Heart right ventricle (tissue), 16 donors: ENCODE measurements at regions of chr5 and their contacts with region 1.

Region 1: DNA sequence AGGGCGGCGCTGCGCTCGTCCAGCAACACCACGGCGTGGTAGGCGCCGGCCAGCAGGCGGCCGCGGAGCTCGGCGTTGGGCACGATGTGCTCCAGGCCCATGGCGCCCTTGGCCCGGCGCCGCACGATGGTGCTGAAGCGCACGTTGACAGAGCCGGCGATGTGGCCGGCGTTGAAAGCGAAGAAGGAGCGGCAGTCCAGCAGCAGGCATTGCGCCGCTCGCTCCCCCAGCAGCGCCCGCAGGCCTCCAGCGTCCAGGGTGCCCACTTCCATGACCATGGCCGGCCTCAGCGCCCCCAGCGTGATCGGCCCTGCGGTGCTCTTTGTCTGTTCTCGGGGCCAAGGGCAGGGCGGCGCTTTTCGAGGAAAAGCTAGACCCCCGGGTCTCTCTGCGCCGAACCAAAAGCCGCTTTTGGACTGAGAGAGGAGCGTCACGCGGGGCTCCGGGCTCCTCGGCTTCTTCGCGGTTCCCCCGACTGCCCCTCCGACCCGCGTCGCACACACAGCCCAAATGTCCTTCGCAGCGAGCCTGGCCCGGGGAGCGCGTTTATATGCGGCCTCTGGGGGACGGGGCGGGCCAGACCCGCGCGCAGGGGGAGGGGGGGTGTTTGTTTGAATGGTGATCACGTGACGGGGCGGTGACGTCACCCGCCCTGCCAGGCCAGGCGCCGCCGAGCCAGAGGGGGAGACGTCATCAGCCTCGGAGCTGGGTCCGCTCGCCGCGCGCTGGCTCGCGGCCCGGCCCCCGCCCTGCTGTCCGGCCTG is at the start of gene DUSP1:
- DNase-seq: peak; percentile 99 to 100
- ATAC-seq: peak; percentile 63 to 88 (median 70)
- H3K4me3 ChIP-seq: peak within 1 kb of the TSS; percentile 62 to 99 (median 92)
- H3K27ac ChIP-seq: peak within 1 kb of the TSS; percentile 95 to 100 (median 100)
- H3K4me1 ChIP-seq: peaks cover under 1 to 87% (median 36%) of the 10 kb centered on the region in 9 donors
- H3K27me3 ChIP-seq: no peaks in the 10 kb centered on the region
- CTCF ChIP-seq: peak in 8 of 9 donors; percentile 16 to 59 (median 39)
- total RNA-seq, gene DUSP1: 55.7 to 215 (median 143) TPM

Region 2: GRCh38 chr5:172594867-172595466 is 175.9 kb before region 1 on chr5:
- intact Hi-C with region 1: no loop called
- DNase-seq: no peak
- ATAC-seq: no peak
- H3K4me3 ChIP-seq: no peak overlapping the region
- H3K27ac ChIP-seq: peak overlapping the region in 2 of 10 donors; percentile 15 to 30
- H3K4me1 ChIP-seq: peaks cover 0 to 27% (median 11%) of the 10 kb centered on the region in 9 donors
- H3K27me3 ChIP-seq: no peaks in the 10 kb centered on the region
- CTCF ChIP-seq: no peak

Region 3: DNA sequence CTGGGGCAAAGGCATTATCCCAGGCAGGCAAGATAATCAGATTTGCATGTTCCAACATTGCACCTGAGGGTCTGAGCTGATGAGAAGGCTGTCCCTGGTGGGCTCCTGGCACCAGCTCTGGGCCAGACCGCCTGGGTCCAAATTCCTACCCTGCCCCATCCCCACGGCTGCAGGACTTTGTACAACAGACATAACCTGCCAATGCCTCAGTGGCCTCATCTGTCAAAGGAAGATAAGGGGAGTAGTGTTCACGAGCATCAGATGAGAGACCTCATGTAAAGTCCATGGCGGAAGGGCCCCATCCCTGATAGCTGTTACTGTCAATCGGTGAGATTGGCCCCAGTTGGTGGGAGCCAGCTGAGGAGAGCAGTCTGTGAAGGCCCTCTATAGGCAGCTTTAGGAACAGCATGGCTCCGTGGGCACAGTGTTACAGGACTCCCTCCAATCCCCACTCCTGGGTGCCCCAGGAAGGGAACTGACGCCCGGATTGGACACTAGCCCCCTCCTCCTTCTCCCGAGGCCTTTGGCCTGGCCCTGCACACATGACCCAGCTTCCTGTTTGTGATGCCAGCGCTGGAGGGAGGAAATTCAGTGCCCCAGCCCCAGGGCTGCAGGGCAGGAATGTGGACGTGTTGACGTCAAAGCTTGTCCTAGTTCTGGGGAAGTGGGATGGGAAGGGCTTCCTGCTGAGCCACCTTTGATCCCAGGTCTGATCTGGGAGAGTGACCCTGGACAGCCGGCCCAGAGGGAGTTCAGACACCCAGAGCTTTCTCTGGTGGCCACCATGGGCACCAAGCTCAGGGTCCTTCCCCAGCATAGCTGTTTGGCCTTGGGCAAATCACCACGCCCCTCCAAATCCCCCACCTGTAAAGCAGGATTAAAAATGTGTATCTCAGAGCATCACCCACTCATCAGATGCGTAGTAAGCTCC is 56.1 kb before region 1 on chr5:
- intact Hi-C with region 1: loop called (anchors 1 to 5 kb)
- DNase-seq: peak; percentile 76 to 84
- ATAC-seq: peak; percentile 45 to 81 (median 78)
- H3K4me3 ChIP-seq: no peak overlapping the region
- H3K27ac ChIP-seq: peak overlapping the region; percentile 66 to 91 (median 83)
- H3K4me1 ChIP-seq: peaks cover 16 to 53% (median 41%) of the 10 kb centered on the region in 9 donors
- H3K27me3 ChIP-seq: peaks cover 0 to 5% (median 0%) of the 10 kb centered on the region in 7 donors
- CTCF ChIP-seq: peak; percentile 80 to 93 (median 86)

Region 4: DNA sequence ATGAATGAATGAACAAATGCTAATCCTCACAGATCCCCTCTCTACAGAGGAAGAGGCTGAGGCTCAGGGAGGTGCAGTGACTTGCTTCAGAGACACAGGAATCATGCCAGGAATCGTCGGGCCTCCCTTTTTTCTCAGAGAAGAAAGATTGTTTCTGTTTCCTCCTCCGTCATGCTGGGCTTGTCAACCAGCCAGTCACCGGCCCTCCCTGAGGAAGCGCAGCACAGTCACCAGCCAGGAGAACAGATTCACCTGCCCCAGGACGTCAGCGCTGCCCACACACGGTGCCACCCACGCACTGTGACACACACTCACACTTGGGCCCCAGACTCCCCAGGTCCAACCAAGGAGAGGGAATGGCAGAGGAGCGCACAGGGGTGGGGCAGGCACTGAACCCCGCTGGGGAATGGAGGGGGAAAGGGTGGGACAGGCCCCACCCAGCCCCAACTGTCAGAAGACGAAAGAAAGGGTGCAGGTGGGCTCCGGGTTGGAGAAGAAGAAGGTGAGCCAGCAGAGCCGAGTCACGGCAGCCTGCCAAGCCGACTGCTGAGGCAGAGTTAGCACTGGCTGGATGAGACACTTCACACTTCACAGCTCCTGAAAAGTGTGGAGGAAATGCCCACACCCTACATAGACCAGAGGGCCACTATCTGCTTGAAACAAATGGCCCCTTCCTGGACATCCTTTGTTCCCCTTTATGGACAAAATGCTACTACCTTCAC is 49.4 kb after region 1 on chr5:
- intact Hi-C with region 1: loop called in 1 of 10 experiments (anchors 10 kb)
- DNase-seq: peak in 1 of 2 donors; percentile 66
- ATAC-seq: peak; percentile 63 to 92 (median 76)
- H3K4me3 ChIP-seq: no peak overlapping the region
- H3K27ac ChIP-seq: peak overlapping the region in 4 of 10 donors; percentile 19 to 38 (median 27)
- H3K4me1 ChIP-seq: peaks cover 0 to 34% (median 7%) of the 10 kb centered on the region in 9 donors
- H3K27me3 ChIP-seq: no peaks in the 10 kb centered on the region
- CTCF ChIP-seq: no peak

Region 5: GRCh38 chr5:172860520-172861443 is 89.9 kb after region 1 on chr5:
- intact Hi-C with region 1: loop called in 6 of 10 experiments (anchors 2 to 10 kb)
- DNase-seq: peak; percentile 88 to 92
- ATAC-seq: peak; percentile 86 to 94 (median 90)
- H3K4me3 ChIP-seq: peak overlapping the region in 7 of 10 donors; percentile 1 to 39 (median 20)
- H3K27ac ChIP-seq: peak overlapping the region; percentile 86 to 97 (median 92)
- H3K4me1 ChIP-seq: peaks cover 41 to 82% (median 65%) of the 10 kb centered on the region in 9 donors
- H3K27me3 ChIP-seq: no peaks in the 10 kb centered on the region
- CTCF ChIP-seq: no peak

Region 6: DNA sequence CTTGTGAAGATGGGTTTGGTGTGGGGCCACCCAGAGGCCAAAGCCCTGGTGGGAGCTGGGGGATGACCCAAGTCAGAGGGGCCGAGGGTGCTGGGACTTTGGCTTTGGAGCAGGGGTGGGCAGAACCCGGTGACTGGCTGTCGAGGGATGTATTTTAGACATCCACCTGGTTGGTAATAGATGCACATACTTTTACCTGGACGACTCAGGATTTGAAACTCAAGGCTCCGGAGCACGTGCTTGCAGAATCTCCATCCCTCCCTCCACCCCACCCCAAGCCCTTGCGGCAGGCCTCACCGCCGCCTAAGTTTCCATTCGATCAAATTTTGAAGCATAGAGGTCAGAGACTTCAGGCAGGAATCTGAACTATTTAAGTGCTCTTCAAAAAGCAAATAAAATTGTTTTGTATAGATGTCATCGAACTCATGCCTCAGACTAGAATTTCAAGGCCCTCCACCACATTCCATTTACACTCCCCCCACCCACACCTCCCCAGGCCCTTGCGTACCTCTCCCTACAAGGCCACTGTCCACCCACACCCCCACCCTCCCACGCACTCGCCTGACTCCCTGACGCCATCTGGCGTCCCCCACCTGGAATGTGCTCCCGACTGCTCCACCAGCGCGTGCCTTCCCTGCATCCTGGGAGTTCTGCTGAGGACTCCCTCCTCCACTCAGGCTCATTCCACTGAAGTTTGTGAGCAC is 131.8 kb after region 1 on chr5:
- intact Hi-C with region 1: loop called in 8 of 10 experiments (anchors 1 to 10 kb)
- DNase-seq: peak; percentile 81 to 82
- ATAC-seq: peak; percentile 61 to 77 (median 68)
- H3K4me3 ChIP-seq: no peak overlapping the region
- H3K27ac ChIP-seq: peak overlapping the region; percentile 47 to 98 (median 82)
- H3K4me1 ChIP-seq: peaks cover 37 to 86% (median 71%) of the 10 kb centered on the region in 9 donors
- H3K27me3 ChIP-seq: no peaks in the 10 kb centered on the region
- CTCF ChIP-seq: peak; percentile 23 to 70 (median 56)